Lower leg skin (tissue), 4 donors: ENCODE measurements at regions of chr17 and their contacts with region 1.

Region 1: GRCh38 chr17:40782450-40782849 is at the start of gene KRT27:
- DNase-seq: no peak
- H3K4me3 ChIP-seq: no peak within 1 kb of the TSS
- CTCF ChIP-seq: no peak
- POLR2A ChIP-seq: no peak
- total RNA-seq, gene KRT27: 0.52 to 69.8 (median 1.3) TPM in 3 of 4 donors, not detected in the other

Region 2: DNA sequence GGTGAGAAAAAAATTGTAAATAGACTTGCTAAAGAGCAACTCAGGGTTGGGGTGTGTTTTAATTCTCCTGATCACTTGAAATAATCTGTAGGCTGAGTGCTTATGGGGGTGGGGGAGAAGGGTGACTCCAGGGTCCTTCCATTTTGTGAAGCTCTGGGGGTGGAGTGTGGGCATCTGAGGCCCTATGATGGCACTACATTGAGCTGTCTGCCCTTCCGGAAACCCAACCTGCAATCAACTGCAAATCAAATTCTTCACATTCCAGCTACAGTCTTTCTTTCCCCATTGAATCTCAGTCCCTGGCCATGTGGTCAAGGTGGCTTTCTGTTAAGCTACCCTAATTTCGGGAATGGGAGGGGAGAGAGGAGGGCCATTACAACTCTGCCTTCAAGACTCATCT is 500.8 kb before region 1 on chr17:
- intact Hi-C with region 1: no loop called
- DNase-seq: peak in 1 of 2 donors; percentile 34
- H3K4me3 ChIP-seq: no peak overlapping the region
- CTCF ChIP-seq: no peak
- POLR2A ChIP-seq: no peak

Region 3: DNA sequence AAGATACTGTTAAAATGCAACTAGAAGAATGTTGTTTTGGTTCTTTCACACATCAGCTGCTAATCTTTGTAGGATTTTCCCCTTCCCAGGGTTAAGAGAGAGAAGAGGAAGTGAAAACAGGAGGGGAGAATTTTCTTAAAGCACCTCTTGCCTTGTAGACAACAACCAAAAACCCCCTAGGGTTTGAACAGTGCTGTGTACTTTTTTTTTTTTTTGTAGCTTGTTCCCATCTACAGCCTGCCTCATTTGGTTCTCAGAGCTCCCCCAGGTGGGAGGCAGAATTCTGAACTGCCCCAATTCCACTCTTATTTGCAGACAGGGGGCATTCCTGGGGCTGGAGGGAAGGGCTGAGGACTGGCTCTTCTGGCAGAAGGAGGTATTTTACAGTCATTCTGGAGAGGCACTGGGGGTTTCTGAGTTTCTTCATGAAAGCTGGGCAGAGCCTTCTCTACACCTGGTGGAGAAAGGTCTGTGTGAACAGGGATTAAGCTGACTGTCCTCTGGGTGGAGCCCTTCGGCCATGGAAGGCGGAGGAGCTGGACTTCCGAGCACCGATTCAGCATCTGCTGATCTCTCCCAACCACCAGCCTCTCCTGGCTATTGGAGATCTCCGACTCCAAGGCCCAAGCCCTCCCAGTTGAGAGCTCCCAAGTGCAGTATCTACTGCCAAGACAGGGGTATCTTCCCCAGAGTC is 167.0 kb before region 1 on chr17:
- intact Hi-C with region 1: loop called (anchors 10 kb)
- DNase-seq: no peak
- H3K4me3 ChIP-seq: no peak overlapping the region
- CTCF ChIP-seq: no peak
- POLR2A ChIP-seq: no peak

Region 4: DNA sequence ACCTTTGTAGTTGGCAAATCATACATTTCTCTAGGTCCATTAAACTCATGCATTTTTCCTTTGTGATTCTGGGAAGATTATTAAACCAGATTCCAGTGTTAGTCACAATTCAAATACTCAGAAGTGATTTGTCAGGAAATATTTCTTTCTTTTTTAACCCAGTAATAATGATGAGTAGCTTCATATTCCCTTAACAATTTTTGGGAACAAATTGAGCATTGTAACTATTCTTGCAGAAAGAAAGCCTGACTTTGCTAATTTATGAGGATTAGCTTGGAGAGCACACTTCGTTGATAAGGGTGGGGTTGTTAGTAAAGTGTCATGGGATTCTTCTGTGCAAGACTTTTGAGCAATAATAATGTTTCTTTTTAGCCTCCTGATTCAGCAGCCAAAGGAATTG is 60.2 kb before region 1 on chr17:
- intact Hi-C with region 1: no loop called
- DNase-seq: no peak
- H3K4me3 ChIP-seq: no peak overlapping the region
- CTCF ChIP-seq: no peak
- POLR2A ChIP-seq: no peak

Region 5: DNA sequence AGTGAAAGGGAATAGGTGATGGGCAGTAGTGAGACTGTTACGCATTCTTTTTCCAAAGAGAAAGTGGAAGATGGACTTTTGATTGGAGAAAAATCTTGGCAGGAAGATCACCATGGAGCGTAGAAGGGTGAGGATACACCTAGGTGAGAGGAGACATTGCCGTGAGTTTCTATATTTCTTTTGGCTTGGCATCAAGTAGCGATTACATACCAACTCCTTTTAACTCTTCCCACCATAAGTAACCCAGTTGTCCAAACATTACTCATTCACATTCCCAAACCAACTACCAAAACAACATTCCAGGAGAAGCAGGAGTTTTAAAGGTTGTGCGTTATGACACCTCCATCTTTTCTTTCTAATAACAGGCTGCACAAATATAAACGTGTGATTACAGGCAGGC is 28.1 kb after region 1 on chr17:
- intact Hi-C with region 1: no loop called
- DNase-seq: no peak
- H3K4me3 ChIP-seq: no peak overlapping the region
- CTCF ChIP-seq: no peak
- POLR2A ChIP-seq: no peak